Endothelial cell of umbilical vein (primary cell): ENCODE measurements at regions of chr6 and their contacts with region 1.

Region 1: DNA sequence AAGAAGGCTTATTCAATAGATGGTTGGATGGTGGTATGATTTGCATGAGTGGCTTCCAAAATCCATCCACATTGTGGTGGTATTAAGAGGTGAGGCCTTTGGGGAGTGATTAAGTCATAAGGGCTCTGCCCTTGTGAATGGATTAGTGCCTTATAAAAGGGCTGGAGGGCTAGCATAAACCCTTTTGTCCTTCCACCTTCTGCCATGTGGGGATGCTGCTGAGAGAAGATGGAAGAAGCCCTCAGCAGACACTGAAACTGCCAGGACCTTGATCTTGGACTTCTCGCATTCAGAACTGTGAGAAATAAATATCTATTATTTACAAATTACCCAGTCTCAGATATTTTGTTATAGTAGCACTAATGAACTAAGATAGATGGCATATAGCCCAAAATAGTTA is 27.8 kb upstream of the SRPK1 start:
- DNase-seq: peak; percentile 46
- H3K4me3 ChIP-seq: no peak overlapping the region
- H3K27ac ChIP-seq: no peak overlapping the region
- H3K4me1 ChIP-seq: peaks cover 10% of the 10 kb centered on the region
- H3K27me3 ChIP-seq: no peaks in the 10 kb centered on the region
- CTCF ChIP-seq: peak in 1 of 2 donors; percentile 38
- POLR2A ChIP-seq: no peak

Region 2: GRCh38 chr6:35973670-35974222 is 25.0 kb after region 1 on chr6:
- CTCF ChIA-PET with region 1: no interaction called
- POLR2A ChIA-PET with region 1: no interaction called
- dilution Hi-C with region 1: no loop called
- intact Hi-C with region 1: no loop called
- DNase-seq: no peak
- H3K4me3 ChIP-seq: no peak overlapping the region
- H3K27ac ChIP-seq: no peak overlapping the region
- H3K4me1 ChIP-seq: peaks cover 6% of the 10 kb centered on the region
- H3K27me3 ChIP-seq: no peaks in the 10 kb centered on the region
- CTCF ChIP-seq: no peak
- POLR2A ChIP-seq: no peak

Region 3: DNA sequence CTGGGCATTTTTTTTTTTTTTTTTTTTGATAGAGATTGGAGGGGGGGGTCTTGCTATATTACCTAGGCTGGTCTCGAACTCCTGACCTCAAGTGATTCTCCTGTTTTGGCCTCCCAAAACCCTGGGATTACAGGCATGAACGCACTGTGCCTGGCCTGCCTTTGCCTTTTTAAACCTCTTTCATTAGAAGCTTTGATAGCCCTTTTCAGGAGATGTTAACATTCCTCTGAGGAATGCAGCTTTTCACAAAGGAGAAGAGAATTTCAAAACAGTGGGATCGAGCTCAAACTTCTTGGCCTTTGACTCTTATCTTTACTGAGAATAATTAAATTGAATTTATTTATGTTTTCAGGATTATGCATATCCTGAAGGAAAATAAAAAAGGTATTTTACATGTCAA is 44.4 kb after region 1 on chr6:
- CTCF ChIA-PET with region 1: no interaction called
- POLR2A ChIA-PET with region 1: no interaction called
- dilution Hi-C with region 1: no loop called
- intact Hi-C with region 1: loop called (anchors 1 kb)
- DNase-seq: no peak
- H3K4me3 ChIP-seq: no peak overlapping the region
- H3K27ac ChIP-seq: no peak overlapping the region
- H3K4me1 ChIP-seq: no peaks in the 10 kb centered on the region
- H3K27me3 ChIP-seq: no peaks in the 10 kb centered on the region
- CTCF ChIP-seq: no peak
- POLR2A ChIP-seq: no peak

Region 4: DNA sequence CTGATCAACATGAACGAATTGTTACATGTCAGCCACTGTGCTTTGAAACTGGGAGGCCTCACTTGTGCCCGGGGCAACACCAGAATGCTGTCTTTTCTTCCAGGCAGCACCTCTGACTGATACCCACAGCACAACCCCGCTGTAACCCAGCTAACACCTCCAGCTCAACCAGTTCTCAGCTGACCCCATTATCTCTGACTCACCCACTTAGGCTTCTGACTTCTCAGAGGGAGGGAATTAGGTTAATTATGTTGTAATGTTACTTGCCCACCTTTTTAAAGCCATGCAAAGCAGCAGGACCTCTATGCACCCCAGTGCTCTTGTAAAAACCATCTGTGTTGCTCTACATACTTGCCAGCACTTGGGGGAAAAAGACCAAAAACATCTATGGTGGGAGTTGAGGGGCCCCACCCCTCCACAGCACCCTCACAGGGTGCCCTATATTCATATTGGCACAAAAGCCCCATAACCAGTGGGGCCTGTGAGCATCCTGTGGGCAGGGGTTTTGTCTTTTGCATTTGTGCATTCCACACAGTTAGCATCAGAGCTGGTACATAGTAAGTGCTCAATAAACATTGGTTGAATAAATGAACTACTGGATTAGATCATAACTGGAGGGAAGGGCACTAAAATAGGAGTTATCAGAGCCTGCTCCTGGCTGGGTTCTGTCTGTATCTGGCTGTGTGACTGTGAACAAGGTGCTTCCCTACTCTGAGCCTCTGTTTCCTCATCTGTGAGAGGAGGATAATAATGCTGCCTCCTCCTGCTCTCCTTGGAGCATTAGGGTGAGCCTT is 365.7 kb after region 1 on chr6:
- CTCF ChIA-PET with region 1: no interaction called
- POLR2A ChIA-PET with region 1: no interaction called
- dilution Hi-C with region 1: no loop called
- intact Hi-C with region 1: no loop called
- DNase-seq: no peak
- H3K4me3 ChIP-seq: no peak overlapping the region
- H3K27ac ChIP-seq: no peak overlapping the region
- H3K4me1 ChIP-seq: no peaks in the 10 kb centered on the region
- H3K27me3 ChIP-seq: peaks cover 20 to 26% of the 10 kb centered on the region in 2 experiments
- CTCF ChIP-seq: no peak
- POLR2A ChIP-seq: no peak